ENCODE measurements at regions of chr7 and their contacts with region 1.

Region 1: GRCh38 chr7:405489-406211 is 114.0 kb downstream of the PDGFA start:
- DNase-seq: peak; percentile 75

Region 2: GRCh38 chr7:311796-312195 is 93.9 kb before region 1 on chr7:
- intact Hi-C with region 1: no loop called
- DNase-seq: peak; percentile 65

Region 3: DNA sequence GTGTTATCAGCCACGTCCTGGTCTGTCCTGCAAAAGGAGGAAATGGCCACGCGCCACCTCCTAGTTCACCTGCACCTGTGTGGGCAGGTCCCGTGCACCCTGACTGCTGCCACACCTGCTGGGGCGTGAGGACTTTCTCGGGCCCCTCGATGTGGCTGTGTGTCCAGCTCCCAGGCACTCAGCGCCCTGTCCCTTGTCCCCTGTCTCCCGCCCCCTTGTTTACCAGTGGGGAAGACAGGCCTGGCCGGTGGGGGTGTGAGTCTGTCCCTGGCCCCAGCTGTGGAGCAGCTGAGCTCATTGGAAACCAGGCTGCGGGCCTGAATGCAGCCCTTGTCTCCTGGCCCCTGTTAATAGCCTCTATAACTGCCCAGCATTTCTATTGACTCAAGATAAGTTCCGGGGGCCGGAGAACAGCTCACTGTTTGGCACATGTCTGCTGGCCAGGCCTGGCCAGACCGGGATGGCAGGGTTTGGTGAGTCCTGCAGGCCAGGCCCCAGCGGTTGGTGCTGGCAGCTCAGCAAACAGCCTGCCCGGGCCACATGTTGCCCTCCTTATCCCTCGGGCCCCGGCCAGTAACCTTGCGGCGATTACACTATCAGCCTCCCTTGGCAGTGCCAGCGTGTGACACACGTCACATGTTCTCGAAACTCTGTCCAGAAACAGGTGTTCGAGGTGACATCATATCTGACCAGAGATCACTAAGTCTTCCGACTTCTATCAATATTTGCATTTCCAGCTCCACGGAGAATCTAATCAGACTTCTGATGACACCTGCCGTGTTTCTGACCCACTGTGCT is 63.6 kb before region 1 on chr7:
- intact Hi-C with region 1: loop called in 1 of 2 experiments (anchors 10 kb)
- DNase-seq: peak; percentile 79

Region 4: DNA sequence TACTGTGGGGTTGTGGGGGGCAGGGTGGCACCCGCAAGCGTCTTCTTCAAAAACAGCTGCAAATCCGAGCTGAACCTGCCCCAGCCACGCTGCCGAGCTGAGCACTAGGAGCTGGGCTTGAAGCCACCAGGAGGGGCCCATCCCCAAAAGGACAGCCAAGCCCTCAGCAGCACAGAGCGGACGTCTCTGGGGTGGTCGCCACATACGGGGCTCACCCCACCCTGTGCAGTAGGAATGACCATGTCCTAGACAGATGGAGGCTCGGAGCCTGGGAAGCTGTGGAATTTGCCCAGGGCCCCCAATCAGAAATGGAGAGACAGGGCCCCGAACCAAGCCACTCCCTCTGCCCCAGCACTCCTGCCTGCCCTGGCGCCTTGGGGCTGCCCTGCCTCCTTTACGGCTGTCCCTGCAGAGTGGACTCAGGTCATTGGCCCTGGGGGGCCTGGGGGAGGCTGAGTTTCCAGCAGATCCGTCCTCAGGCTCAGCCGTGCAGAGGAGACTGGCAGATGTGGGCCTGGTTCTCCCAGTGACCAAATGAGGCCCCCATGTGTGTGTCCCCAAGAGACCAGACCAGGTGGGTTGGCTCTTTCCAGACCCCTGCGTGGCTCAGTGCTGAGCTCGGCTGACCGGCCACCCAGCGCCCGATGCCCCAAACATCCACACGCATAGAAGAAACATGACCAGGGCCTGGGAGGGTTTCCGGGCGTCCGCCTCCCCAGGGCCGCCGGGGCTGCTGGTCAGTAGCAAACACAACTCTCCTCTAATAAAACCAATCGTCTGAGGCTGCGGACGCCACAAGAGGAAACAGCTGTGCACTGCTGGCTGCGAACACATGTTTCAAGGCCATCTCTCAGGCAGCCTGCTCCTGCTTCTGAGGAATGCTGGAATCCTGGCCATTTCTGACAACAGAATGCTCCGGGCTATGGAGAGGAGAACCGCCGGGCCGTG is 59.1 kb after region 1 on chr7:
- intact Hi-C with region 1: no loop called
- DNase-seq: peak; percentile 80

Region 5: GRCh38 chr7:756911-757560 is 351.4 kb after region 1 on chr7:
- intact Hi-C with region 1: loop called in 1 of 2 experiments (anchors 1 kb)
- DNase-seq: peak; percentile 63

Measured in posterior vena cava (tissue), 2 donors.